ENCODE measurements at regions of chr1 and their contacts with region 1.

Region 1: GRCh38 chr1:40075266-40075665 is 21.8 kb downstream of the PPT1 start:
- DNase-seq: no peak
- H3K4me3 Mint-ChIP-seq: no peak overlapping the region
- H3K27ac Mint-ChIP-seq: no peak overlapping the region
- H3K4me1 Mint-ChIP-seq: peaks cover 17% of the 10 kb centered on the region
- H3K27me3 Mint-ChIP-seq: no peaks in the 10 kb centered on the region

Region 2: GRCh38 chr1:39833121-39833520 is 242.1 kb before region 1 on chr1:
- CTCF ChIA-PET with region 1: no interaction called
- POLR2A ChIA-PET with region 1: no interaction called
- DNase-seq: no peak
- H3K4me3 Mint-ChIP-seq: no peak overlapping the region
- H3K27ac Mint-ChIP-seq: no peak overlapping the region
- H3K4me1 Mint-ChIP-seq: no peaks in the 10 kb centered on the region
- H3K27me3 Mint-ChIP-seq: peaks cover 12% of the 10 kb centered on the region

Region 3: GRCh38 chr1:40064797-40065499 is 10.3 kb before region 1 on chr1:
- CTCF ChIA-PET with region 1: interaction called, 11 read pairs
- POLR2A ChIA-PET with region 1: interaction called, 3 read pairs
- DNase-seq: peak; percentile 17
- H3K4me3 Mint-ChIP-seq: peak overlapping the region; percentile 3
- H3K27ac Mint-ChIP-seq: peak overlapping the region; percentile 81
- H3K4me1 Mint-ChIP-seq: peaks cover 67% of the 10 kb centered on the region
- H3K27me3 Mint-ChIP-seq: no peaks in the 10 kb centered on the region

Measured in activated CD4-positive, alpha-beta T cell treated with anti-CD3 and anti-CD28 coated beads, Interleukin-2, amount 10 ng/mL, durations not matched to agents 7 days and 5 days (primary cell).